CD4-positive, alpha-beta T cell (primary cell): ENCODE measurements at regions of chr10 and their contacts with region 1.

Region 1: GRCh38 chr10:80444646-80445319 is 9.3 kb upstream of the TSPAN14 start:
- DNase-seq: peak in 12 of 14 experiments; percentile 39 to 92 (median 67)
- ATAC-seq: peak; percentile 82
- H3K4me3 ChIP-seq: no peak overlapping the region
- H3K4me3 Mint-ChIP-seq: no peak overlapping the region
- H3K27ac ChIP-seq: no peak overlapping the region
- H3K27ac Mint-ChIP-seq: peak overlapping the region; percentile 84
- H3K4me1 ChIP-seq: peaks cover 23% of the 10 kb centered on the region
- H3K4me1 Mint-ChIP-seq: peaks cover 51% of the 10 kb centered on the region
- H3K27me3 ChIP-seq: no peaks in the 10 kb centered on the region
- H3K27me3 Mint-ChIP-seq: no peaks in the 10 kb centered on the region
- CTCF ChIP-seq: peak; percentile 65

Region 2: DNA sequence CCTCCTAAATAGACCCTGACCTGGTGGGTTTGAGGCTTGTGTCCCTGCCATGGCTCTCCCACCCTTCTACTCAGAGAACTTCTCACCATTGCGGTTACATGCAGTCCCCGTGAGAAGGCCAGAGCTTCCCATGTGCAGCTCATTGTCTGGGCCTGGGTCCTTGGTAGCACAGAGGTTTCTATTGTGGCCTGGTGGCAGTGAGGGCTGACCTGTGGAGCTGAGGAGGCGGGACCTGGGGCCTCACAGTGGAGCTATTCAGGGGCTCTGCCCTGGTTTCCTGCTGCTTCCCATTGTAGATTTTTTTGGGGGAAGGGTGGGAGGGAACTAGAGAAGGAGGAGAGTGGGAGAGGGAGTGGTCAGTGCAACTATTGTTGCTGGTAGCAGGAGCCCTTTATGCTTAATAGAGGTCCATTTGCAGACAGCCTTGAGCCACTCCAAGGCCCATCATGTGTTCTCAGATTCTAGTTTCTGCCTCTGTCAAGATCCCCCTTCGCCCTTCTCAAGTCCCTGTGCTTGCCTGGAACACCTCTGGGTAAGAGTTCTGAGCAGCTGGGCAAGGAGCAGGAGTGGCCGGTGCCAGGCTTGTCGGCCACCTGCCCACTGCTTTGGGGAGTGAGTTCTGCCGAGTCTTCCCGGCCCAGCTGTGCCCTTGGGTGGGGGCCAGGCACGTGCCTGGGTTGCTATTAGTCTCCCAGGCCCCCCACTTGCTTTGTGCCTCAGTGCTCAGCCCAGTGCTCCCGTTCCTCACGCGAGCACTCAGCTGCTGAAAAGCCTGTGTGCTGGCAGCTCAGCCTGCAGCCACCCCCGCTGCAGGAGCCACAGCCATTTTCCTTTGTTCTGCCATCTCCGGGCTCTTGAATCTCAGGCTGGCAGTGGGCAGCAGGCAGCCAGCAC is 20.0 kb after region 1 on chr10:
- CTCF ChIA-PET with region 1: interaction called, 12 read pairs
- POLR2A ChIA-PET with region 1: interaction called, 176 read pairs
- intact Hi-C with region 1: no loop called
- DNase-seq: peak in 6 of 14 experiments; percentile 21 to 58 (median 47)
- ATAC-seq: no peak
- H3K4me3 ChIP-seq: peak overlapping the region; percentile 49
- H3K4me3 Mint-ChIP-seq: peak overlapping the region; percentile 85
- H3K27ac ChIP-seq: peak overlapping the region; percentile 85 to 91
- H3K27ac Mint-ChIP-seq: peak overlapping the region; percentile 92
- H3K4me1 ChIP-seq: peaks cover 100% of the 10 kb centered on the region
- H3K4me1 Mint-ChIP-seq: peaks cover 97% of the 10 kb centered on the region
- H3K27me3 ChIP-seq: no peaks in the 10 kb centered on the region
- H3K27me3 Mint-ChIP-seq: no peaks in the 10 kb centered on the region
- CTCF ChIP-seq: no peak

Region 3: GRCh38 chr10:80487791-80488538 is 43.2 kb after region 1 on chr10:
- CTCF ChIA-PET with region 1: interaction called, 6 read pairs
- POLR2A ChIA-PET with region 1: interaction called, 13 read pairs
- intact Hi-C with region 1: no loop called
- DNase-seq: peak in 13 of 14 experiments; percentile 43 to 88 (median 58)
- ATAC-seq: peak; percentile 62
- H3K4me3 ChIP-seq: peak overlapping the region; percentile 37
- H3K4me3 Mint-ChIP-seq: peak overlapping the region; percentile 56
- H3K27ac ChIP-seq: peak overlapping the region; percentile 81 to 84
- H3K27ac Mint-ChIP-seq: peak overlapping the region; percentile 78
- H3K4me1 ChIP-seq: peaks cover 98% of the 10 kb centered on the region
- H3K4me1 Mint-ChIP-seq: peaks cover 99% of the 10 kb centered on the region
- H3K27me3 ChIP-seq: no peaks in the 10 kb centered on the region
- H3K27me3 Mint-ChIP-seq: no peaks in the 10 kb centered on the region
- CTCF ChIP-seq: no peak

Region 4: GRCh38 chr10:80504158-80504811 is 59.5 kb after region 1 on chr10:
- CTCF ChIA-PET with region 1: interaction called, 147 read pairs
- POLR2A ChIA-PET with region 1: interaction called, 36 read pairs
- intact Hi-C with region 1: loop called (anchors 1 kb)
- DNase-seq: no peak
- ATAC-seq: no peak
- H3K4me3 ChIP-seq: no peak overlapping the region
- H3K4me3 Mint-ChIP-seq: peak overlapping the region; percentile 68
- H3K27ac ChIP-seq: peak overlapping the region; percentile 46 to 54
- H3K27ac Mint-ChIP-seq: peak overlapping the region; percentile 78
- H3K4me1 ChIP-seq: peaks cover 72% of the 10 kb centered on the region
- H3K4me1 Mint-ChIP-seq: peaks cover 82% of the 10 kb centered on the region
- H3K27me3 ChIP-seq: no peaks in the 10 kb centered on the region
- H3K27me3 Mint-ChIP-seq: no peaks in the 10 kb centered on the region
- CTCF ChIP-seq: no peak